ENCODE measurements at regions of chr15 and their contacts with region 1.

Region 1: GRCh38 chr15:74540761-74541493 is at the start of gene ARID3B:
- DNase-seq: peak; percentile 96 to 99
- H3K4me3 ChIP-seq: peak within 1 kb of the TSS; percentile 64
- CTCF ChIP-seq: no peak
- POLR2A ChIP-seq: no peak
- total RNA-seq, gene ARID3B: 4.9 to 6.3 (median 6.1) TPM

Region 2: DNA sequence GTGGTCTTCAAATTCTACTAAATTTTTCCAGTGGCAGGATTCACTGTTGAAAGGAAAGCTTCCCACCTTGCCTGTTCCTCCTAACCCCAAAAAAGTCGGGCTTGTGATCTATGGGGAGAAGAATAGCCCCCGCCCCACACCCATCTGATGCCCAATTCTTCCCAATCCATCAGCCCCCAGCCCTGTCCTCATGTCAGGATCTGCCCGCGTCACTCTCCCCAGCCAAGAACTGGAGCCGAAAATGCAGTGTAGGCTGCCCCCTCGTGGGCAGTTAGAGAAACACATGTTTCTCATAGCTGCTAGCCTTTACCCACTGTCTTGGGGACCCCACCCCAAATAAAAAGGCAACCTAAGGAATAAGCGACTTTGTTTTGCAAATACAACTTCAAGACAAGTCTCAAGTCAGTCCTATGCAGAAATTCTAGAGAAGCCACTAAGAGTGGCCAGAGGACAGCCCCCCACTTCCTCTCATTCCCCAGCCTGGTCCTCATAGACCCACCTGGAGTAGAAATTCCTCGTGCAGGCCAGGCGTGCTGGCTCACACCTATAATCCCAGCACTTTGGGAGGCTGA is 227.9 kb after region 1 on chr15:
- intact Hi-C with region 1: loop called (anchors 10 kb)
- DNase-seq: peak; percentile 53 to 92
- H3K4me3 ChIP-seq: no peak overlapping the region
- CTCF ChIP-seq: peak in 1 of 3 donors; percentile 68
- POLR2A ChIP-seq: no peak

Region 3: GRCh38 chr15:75347222-75347878 is 806.4 kb after region 1 on chr15:
- intact Hi-C with region 1: loop called (anchors 10 kb)
- DNase-seq: peak; percentile 57 to 94
- H3K4me3 ChIP-seq: peak overlapping the region; percentile 85
- CTCF ChIP-seq: no peak
- POLR2A ChIP-seq: no peak

Measured in lower leg skin (tissue), 4 donors.